Activated T-helper 1 cell treated with anti-CD3 and anti-CD28 coated beads, Interleukin-12 subunit alpha, Interleukin-12 subunit beta, Interleukin-2, Interleukin-4 antibody, amounts not matched to agents 30 ng/mL and 10 ng/mL and 1 ng/mL, durations not matched to agents 14 hours and 24 hours and 36 hours (primary cell): ENCODE measurements at regions of chr2 and their contacts with region 1.

Region 1: GRCh38 chr2:170873035-170873692 is 55.9 kb upstream of the GORASP2 start:
- DNase-seq: peak; percentile 63
- H3K4me3 Mint-ChIP-seq: peak overlapping the region; percentile 38
- H3K27ac Mint-ChIP-seq: peak overlapping the region; percentile 73
- H3K4me1 Mint-ChIP-seq: peaks cover 13% of the 10 kb centered on the region
- H3K27me3 Mint-ChIP-seq: no peaks in the 10 kb centered on the region

Region 2: DNA sequence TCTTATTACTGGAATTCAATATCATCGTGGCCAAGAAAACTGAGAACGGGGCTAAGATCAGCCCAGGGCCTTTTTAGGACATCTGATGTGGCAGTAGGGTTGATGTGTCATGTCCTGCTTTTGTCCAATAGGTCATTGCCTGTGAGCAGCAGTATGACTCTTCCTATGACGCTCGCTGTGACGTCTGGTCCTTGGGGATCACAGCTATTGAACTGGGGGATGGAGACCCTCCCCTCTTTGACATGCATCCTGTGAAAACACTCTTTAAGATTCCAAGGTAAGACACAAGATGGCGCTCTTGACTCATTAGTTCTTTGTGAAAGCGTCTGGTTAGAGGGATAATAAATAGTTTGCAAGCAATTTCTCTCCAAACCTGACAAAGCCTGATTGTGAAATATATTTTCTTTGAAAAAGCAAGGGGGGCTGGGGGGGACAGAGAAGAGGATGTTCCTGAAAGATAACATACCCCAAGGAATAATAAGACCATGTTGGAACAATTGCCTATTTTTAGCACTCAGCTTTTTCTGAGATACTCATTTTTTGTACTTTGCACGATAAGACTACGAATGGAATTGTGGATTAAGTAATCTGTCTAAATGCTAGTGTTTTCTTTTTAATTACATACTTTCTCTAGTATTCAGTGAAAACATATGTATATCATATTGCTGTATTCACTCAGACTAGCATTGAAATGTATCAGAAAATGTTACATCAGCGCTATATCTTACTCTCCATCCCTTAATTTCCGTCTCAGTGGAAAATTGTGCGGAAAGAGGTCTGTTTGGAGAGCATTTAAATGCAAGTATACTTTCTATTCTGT is 637.1 kb before region 1 on chr2:
- intact Hi-C with region 1: loop called (anchors 1 kb)
- DNase-seq: no peak
- H3K4me3 Mint-ChIP-seq: no peak overlapping the region
- H3K27ac Mint-ChIP-seq: no peak overlapping the region
- H3K4me1 Mint-ChIP-seq: no peaks in the 10 kb centered on the region
- H3K27me3 Mint-ChIP-seq: peaks cover 21% of the 10 kb centered on the region

Region 3: DNA sequence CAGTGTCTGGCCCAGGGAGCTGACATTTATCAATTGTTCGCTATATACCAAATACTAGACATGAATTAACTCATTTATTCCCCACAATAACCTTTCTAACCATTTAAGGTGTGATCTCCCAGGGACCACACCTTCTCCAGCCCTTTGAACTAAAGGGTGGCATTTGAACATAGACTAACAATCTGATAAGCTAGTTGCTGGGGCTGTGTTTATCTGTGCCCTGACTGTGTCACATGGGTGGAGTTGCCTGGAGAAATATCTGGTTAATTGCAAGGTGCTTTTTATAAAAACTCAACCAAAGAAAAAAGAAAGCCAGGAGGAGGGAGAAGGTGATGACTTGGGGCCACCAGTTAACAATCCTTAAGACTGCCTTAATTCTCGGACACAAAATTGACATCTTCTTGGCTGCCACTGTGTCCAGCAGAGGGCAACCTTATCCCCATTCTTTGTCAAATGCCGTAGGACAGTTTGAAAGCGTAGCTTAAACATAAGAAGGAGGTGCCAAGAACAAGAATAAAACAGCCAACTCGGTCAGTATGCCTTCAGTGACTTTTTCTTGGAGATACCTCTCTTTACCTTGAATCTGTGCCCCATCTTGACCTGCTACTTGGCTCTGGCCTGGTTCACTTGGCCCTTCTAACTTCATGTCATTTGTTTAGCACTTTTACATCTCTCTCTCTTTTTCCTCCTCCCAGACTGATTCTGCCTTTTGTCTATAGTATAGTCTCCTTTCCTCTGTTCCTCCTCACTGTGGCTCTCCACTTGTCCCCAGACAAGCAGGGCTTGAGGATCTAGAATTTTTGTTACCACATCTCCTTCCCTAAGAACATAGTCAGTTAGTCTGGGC is 511.9 kb before region 1 on chr2:
- intact Hi-C with region 1: loop called (anchors 1 kb)
- DNase-seq: peak; percentile 39
- H3K4me3 Mint-ChIP-seq: no peak overlapping the region
- H3K27ac Mint-ChIP-seq: peak overlapping the region; percentile 94
- H3K4me1 Mint-ChIP-seq: peaks cover 33% of the 10 kb centered on the region
- H3K27me3 Mint-ChIP-seq: peaks cover 2% of the 10 kb centered on the region

Region 4: DNA sequence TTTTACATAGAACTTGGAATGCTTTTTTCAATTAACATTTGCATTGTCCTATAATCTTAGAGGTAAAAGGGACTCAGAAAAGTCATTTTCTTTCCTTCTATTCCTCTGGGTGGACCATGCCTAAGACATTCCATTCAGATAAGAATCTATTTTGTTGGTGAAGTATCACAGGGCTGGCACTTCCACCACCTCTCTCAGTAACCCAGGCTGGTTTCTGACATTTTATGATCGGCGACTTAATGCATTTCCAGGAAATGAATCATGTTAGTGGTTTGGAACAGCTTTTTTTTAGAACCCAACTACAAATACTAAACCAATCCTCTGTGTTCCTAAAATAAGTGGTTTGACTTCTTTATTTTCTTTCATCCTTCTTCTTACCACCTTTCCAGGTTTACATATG is 29.5 kb before region 1 on chr2:
- intact Hi-C with region 1: loop called (anchors 2 kb)
- DNase-seq: no peak
- H3K4me3 Mint-ChIP-seq: peak overlapping the region; percentile 37
- H3K27ac Mint-ChIP-seq: no peak overlapping the region
- H3K4me1 Mint-ChIP-seq: peaks cover 16% of the 10 kb centered on the region
- H3K27me3 Mint-ChIP-seq: peaks cover 2% of the 10 kb centered on the region

Region 5: DNA sequence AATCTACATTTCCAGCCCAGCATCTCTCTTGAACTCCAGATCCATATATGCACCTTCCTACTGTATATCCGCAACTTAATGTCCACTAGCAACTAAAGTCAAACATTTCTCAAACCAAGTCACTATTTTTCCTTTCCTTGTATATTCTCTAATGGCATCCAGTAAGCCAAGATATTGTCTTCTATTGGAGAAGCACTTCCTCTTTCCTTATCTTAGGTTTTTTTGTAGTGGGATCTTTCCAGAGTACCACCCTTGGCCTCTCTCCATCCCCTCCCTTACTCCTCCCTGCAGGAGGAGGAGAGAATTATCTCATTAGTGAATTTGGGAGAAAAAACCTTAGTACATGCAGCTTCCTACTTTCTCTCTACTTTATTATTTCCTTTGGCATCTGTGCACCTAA is 805.5 kb after region 1 on chr2:
- intact Hi-C with region 1: no loop called
- DNase-seq: no peak
- H3K4me3 Mint-ChIP-seq: no peak overlapping the region
- H3K27ac Mint-ChIP-seq: no peak overlapping the region
- H3K4me1 Mint-ChIP-seq: no peaks in the 10 kb centered on the region
- H3K27me3 Mint-ChIP-seq: peaks cover 12% of the 10 kb centered on the region